Left lung (tissue), 14 donors: ENCODE measurements at regions of chr10 and their contacts with region 1.

Region 1: DNA sequence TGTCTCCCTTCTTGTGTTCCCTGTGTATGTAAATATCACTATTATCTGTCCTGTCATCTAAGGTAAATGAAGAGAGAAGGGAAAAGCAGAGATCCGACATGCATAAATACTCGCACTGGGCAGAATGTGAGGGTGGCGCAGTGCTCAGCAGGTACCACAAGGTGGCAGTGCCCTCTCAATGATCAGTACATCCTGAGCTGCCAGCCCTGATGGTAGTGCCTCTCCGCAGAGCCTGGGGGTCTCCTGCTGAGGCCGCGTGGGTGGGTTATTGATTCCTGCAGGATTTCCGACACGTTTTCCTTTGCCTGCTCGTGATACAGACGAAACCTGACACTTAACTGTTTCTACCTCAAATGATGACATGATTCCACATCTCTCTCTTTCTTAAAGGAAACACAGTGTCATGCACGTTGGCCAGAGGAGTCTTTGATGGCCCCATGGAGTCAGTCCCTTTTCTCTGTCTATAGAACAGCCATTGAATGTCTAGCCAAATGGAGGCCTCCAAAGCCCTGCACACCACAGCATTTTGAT is 19.8 kb downstream of the RGR start:
- DNase-seq: peak; percentile 54 to 81 (median 62)
- ATAC-seq: peak; percentile 98
- H3K4me3 ChIP-seq: no peak overlapping the region
- H3K27ac ChIP-seq: no peak overlapping the region
- H3K4me1 ChIP-seq: no peaks in the 10 kb centered on the region
- H3K27me3 ChIP-seq: peaks cover 6 to 7% of the 10 kb centered on the region in 2 donors
- CTCF ChIP-seq: peak; percentile 86 to 93

Region 2: GRCh38 chr10:84375011-84375410 is 110.3 kb after region 1 on chr10:
- intact Hi-C with region 1: loop called in 1 of 2 experiments (anchors 10 kb)
- DNase-seq: peak in 2 of 4 donors; percentile 47 to 58
- ATAC-seq: peak; percentile 80
- H3K4me3 ChIP-seq: no peak overlapping the region
- H3K27ac ChIP-seq: no peak overlapping the region
- H3K4me1 ChIP-seq: no peaks in the 10 kb centered on the region
- H3K27me3 ChIP-seq: no peaks in the 10 kb centered on the region
- CTCF ChIP-seq: peak; percentile 50 to 56

Region 3: GRCh38 chr10:84789026-84789425 is 524.4 kb after region 1 on chr10:
- intact Hi-C with region 1: no loop called
- DNase-seq: no peak
- ATAC-seq: no peak
- H3K4me3 ChIP-seq: no peak overlapping the region
- H3K27ac ChIP-seq: no peak overlapping the region
- H3K4me1 ChIP-seq: no peaks in the 10 kb centered on the region
- H3K27me3 ChIP-seq: no peaks in the 10 kb centered on the region
- CTCF ChIP-seq: no peak